WTC11 (cell line): ENCODE measurements at regions of chr9 and their contacts with region 1.

Region 1: DNA sequence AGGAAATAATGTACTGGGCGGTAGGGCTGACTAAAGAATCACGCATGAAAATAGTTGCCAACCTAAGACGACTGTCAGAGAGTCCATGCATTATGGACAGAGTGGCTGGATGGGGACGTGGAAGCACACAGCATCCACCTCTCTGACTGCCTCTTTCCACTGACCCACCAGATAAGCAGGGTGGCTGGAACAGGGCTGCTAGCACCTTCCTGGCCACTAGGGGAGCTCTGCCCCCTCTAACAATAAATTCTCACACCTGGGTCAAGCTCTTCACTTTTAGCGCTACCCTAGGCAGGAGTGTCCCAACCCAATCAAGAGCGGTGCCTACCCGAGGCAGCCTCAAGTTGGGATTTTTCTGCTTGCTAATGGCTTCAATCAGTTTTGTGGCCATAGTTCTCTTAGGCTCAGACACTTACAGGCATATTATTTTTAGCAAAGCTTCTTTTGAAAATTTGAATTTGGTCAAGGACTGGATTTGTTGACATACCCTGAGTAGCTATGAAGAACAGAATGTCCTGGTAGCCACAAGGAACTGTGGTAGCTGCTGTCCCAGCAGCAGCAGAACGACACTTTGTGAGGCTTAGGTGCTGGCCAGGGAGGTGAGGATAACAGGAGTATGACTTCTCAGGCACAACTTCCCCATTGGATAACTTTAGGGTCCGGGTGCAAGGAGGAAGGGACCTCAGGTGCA is 6.9 kb upstream of the TPM2 start:
- DNase-seq: peak; percentile 81
- ATAC-seq: peak; percentile 97
- H3K4me3 Mint-ChIP-seq: no peak overlapping the region
- H3K27ac Mint-ChIP-seq: 0 out of 2 replicates have a peak overlapping the region, but pooled peaks have one; percentile 72
- H3K4me1 Mint-ChIP-seq: peaks cover 4% of the 10 kb centered on the region
- H3K27me3 Mint-ChIP-seq: no peaks in the 10 kb centered on the region
- CTCF ChIP-seq: peak; percentile 85

Region 2: GRCh38 chr9:35385042-35385441 is 311.6 kb before region 1 on chr9:
- CTCF ChIA-PET with region 1: no interaction called
- POLR2A ChIA-PET with region 1: no interaction called
- DNase-seq: no peak
- ATAC-seq: peak; percentile 47; the same call in 1 of the 2 replicates
- H3K4me3 Mint-ChIP-seq: no peak overlapping the region
- H3K27ac Mint-ChIP-seq: peak overlapping the region; percentile 65; the same call in 1 of the 2 replicates
- H3K4me1 Mint-ChIP-seq: peaks cover 4% of the 10 kb centered on the region
- H3K27me3 Mint-ChIP-seq: no peaks in the 10 kb centered on the region
- CTCF ChIP-seq: no peak

Region 3: GRCh38 chr9:35616681-35617459 is 79.8 kb before region 1 on chr9:
- CTCF ChIA-PET with region 1: interaction called, 18 read pairs
- POLR2A ChIA-PET with region 1: no interaction called
- DNase-seq: peak; percentile 66
- ATAC-seq: peak; percentile 80
- H3K4me3 Mint-ChIP-seq: peak overlapping the region; percentile 73
- H3K27ac Mint-ChIP-seq: no peak overlapping the region
- H3K4me1 Mint-ChIP-seq: peaks cover 9% of the 10 kb centered on the region
- H3K27me3 Mint-ChIP-seq: peaks cover 66% of the 10 kb centered on the region
- CTCF ChIP-seq: no peak

Region 4: GRCh38 chr9:35657546-35658136 is 39.0 kb before region 1 on chr9 and contains the start of gene RMRP:
- CTCF ChIA-PET with region 1: interaction called, 127 read pairs
- POLR2A ChIA-PET with region 1: interaction called, 38 read pairs
- DNase-seq: peak; percentile 96
- ATAC-seq: peak; percentile 90
- H3K4me3 Mint-ChIP-seq: peak within 1 kb of the TSS; percentile 85
- H3K27ac Mint-ChIP-seq: peak within 1 kb of the TSS; percentile 100
- H3K4me1 Mint-ChIP-seq: peaks cover 20% of the 10 kb centered on the region
- H3K27me3 Mint-ChIP-seq: peaks cover 23% of the 10 kb centered on the region
- CTCF ChIP-seq: no peak
- total RNA-seq, gene RMRP: 23,577 to 25,958 TPM (median 25,042 TPM) in 3 replicates

Region 5: GRCh38 chr9:35675732-35676392 is 20.8 kb before region 1 on chr9:
- CTCF ChIA-PET with region 1: interaction called, 39 read pairs
- POLR2A ChIA-PET with region 1: interaction called, 21 read pairs
- DNase-seq: peak; percentile 95
- ATAC-seq: peak; percentile 92
- H3K4me3 Mint-ChIP-seq: peak overlapping the region; percentile 69
- H3K27ac Mint-ChIP-seq: no peak overlapping the region
- H3K4me1 Mint-ChIP-seq: peaks cover 15% of the 10 kb centered on the region
- H3K27me3 Mint-ChIP-seq: peaks cover 30% of the 10 kb centered on the region
- CTCF ChIP-seq: no peak

Region 6: DNA sequence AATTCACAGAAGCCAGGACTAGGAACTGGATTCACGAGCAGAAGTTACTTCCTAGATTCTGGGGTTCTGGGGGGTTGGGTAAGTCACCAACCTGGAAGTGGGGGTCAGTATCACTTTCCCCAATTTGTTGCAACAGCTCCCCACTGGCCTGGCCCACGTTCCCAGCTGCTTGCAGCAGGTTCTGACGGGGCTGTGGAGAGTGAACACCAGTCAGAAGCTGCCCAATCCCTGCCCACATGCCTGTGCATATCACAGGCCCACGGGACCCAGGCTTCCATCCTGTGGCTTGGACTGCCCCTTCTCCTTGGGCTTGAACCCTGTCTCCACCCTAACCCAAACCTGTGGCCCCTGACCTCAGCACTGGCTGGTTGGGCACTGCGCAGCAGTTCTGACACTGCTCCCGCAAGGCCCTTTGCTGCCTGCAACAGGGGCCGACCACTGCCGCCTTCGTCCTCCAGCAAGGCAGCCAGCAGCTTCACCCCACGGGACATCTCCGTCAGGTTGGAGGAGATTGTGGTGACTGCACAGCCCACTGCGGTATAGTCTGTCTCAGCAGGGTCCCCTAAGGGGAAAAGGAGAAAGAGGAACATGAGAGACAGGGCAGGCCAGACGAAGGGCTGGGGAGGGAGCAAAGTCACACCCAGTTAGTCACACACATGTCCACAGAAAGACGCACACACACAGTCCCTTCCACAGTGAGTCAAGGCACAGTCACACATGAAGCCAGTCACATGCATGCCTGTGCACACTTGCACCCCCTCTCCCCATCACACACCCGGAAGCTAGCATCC is 22.2 kb after region 1 on chr9:
- CTCF ChIA-PET with region 1: interaction called, 29 read pairs
- POLR2A ChIA-PET with region 1: no interaction called
- DNase-seq: no peak
- ATAC-seq: no peak
- H3K4me3 Mint-ChIP-seq: no peak overlapping the region
- H3K27ac Mint-ChIP-seq: no peak overlapping the region
- H3K4me1 Mint-ChIP-seq: no peaks in the 10 kb centered on the region
- H3K27me3 Mint-ChIP-seq: no peaks in the 10 kb centered on the region
- CTCF ChIP-seq: no peak

Region 7: GRCh38 chr9:35976726-35977125 is 280.1 kb after region 1 on chr9:
- CTCF ChIA-PET with region 1: no interaction called
- POLR2A ChIA-PET with region 1: no interaction called
- DNase-seq: no peak
- ATAC-seq: no peak
- H3K4me3 Mint-ChIP-seq: no peak overlapping the region
- H3K27ac Mint-ChIP-seq: no peak overlapping the region
- H3K4me1 Mint-ChIP-seq: peaks cover 10% of the 10 kb centered on the region
- H3K27me3 Mint-ChIP-seq: peaks cover 48% of the 10 kb centered on the region
- CTCF ChIP-seq: no peak